Ascending aorta (tissue), 2 donors: ENCODE measurements at regions of chr10 and their contacts with region 1.

Region 1: DNA sequence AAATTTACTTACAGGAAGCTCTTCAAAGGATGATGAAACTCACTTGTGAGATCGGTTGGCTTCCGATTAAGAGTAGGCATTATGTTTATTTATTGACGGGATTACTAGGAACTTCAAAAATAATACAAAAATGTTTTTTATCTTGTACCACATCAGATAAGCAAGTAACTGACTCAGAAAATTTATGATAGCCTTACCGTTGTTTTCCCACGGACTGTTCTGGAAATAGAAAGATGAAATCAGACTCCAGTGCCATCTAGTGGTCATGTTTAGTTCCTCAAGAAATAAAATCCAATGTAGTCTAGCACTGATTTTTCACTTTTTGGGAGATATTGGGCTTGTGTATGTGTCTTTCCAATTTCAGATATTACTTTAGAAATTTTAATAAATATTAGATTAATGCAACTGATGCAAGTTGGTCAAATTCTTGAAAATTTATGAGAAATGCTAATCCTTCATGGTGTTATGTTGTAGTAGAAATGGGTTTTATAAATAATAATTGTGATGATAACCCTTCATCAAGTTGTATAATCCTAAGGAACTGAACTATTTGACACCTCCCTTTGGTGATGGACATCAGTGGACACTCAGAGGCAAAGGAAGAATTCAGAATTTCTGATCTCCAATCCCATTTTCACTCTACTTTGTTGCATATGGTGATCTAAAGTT is 168.8 kb downstream of the TMEM26 start:
- DNase-seq: no peak
- H3K4me3 ChIP-seq: peak overlapping the region in 1 of 2 donors; percentile 37
- H3K27ac ChIP-seq: no peak overlapping the region
- H3K4me1 ChIP-seq: no peaks in the 10 kb centered on the region
- H3K27me3 ChIP-seq: no peaks in the 10 kb centered on the region
- CTCF ChIP-seq: peak; percentile 52 to 77 (median 73)

Region 2: DNA sequence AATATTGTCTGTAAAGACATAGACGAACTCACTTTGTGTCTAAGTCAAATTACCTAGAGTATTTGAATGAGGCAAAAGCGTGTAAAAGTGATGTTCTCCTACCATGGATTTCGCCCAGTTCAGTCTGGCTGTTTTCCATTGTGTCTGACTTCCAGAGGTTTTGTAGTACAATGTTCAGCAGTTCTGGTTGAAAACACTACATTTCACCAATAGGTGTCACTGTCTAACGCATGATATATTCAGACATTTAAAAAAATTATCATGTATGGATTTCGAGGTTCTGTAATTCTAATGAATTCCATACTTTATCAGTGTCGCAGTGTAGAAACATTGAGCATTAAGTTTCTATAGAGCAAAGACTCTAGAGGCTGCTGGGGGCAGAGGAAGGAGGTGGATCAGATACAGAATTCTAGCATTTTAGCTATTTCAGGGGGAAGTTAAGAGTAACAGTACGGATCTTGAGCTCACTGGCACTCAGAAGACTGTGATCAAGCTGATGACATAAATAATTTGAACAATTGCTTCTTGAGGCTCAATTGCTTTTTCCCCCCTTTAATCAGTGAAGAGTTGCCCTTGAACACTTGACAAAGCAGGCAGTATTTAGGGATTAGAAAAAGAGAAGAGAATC is 143.5 kb before region 1 on chr10:
- intact Hi-C with region 1: loop called (anchors 2 kb)
- DNase-seq: no peak
- H3K4me3 ChIP-seq: no peak overlapping the region
- H3K27ac ChIP-seq: no peak overlapping the region
- H3K4me1 ChIP-seq: no peaks in the 10 kb centered on the region
- H3K27me3 ChIP-seq: no peaks in the 10 kb centered on the region
- CTCF ChIP-seq: peak; percentile 14 to 82 (median 53)